GM18951 (cell line): ENCODE measurements at regions of chr2 and their contacts with region 1.

Region 1: GRCh38 chr2:217713395-217714286 is 289.2 kb downstream of the TNS1 start:
- POLR2A ChIP-seq: no peak

Region 2: DNA sequence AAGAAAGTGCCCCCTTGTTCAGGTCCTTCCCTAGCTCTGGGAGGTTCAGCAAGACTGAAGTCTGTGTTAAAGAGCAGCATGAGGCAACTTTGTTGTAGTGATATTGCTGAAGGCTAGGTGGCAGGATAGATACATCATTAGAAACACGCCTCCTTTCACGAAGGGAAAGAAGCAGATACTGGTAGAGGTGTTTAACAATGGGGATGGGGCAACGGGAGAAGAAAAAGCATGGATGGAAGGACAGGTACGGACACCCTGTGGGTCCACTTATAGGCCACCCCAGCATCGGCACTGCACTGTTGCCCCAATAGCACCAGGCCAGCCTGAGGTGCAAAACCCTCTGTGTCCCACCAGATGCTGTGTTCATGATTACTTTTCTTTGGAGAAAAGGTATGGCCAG is 1014.7 kb before region 1 on chr2:
- in situ Hi-C with region 1: loop called (anchors 25 kb)
- POLR2A ChIP-seq: no peak